ENCODE measurements at regions of chr12 and their contacts with region 1.

Region 1: DNA sequence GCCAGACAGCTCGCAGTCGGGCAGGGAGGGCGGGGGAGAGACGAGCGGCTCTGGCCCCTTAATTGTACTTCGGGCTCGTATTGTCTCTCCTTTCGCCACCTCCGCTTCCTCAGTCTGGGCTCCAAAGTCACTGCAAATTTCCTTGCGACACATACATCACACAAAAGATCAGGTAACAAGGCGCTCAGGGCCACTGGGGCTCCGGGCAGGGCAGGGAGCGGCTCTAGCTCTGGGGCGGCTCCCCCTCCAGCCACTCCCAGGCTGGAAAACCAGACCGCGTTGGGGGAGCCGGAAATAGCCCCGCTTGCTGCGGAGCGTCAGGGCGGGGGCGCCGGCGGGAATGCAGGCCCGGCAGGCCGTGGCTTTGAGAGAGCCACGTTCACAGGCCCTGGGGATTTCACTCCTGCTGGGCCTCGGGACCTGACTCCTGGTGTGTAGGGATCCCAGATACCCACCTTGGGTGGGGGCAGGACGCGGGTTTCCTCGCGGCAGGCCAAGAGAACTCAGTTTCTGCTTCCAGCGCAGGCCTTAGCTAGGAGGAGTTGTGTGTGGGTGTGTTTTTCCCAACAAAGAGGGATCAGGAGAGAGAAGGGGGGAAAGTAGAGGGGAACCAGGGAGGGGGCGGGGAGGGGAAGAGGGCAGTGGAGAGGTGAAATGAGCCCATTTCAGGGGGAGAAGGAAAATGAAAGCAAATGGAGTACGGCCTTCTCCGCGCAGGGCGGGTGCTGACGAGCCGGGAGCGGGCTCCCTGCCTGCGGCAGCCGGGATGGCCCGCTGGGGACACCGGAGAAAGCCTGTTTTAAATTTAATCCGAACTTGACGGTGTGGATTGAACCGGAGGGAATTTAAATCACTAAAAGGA is 4.4 kb upstream of the HOXC9 start:
- DNase-seq: peak in 1 of 2 donors; percentile 60
- ATAC-seq: peak; percentile 50 to 65 (median 53)
- H3K4me3 ChIP-seq: peak overlapping the region; percentile 43
- H3K4me3 Mint-ChIP-seq: peak overlapping the region; percentile 91
- H3K27ac ChIP-seq: no peak overlapping the region
- H3K27ac Mint-ChIP-seq: peak overlapping the region in 1 of 2 donors; percentile 81
- H3K4me1 ChIP-seq: peaks cover 49% of the 10 kb centered on the region
- H3K4me1 Mint-ChIP-seq: peaks cover 46 to 47% of the 10 kb centered on the region in 2 donors
- H3K27me3 ChIP-seq: peaks cover 92% of the 10 kb centered on the region
- H3K27me3 Mint-ChIP-seq: peaks cover 74 to 89% of the 10 kb centered on the region in 2 donors
- CTCF ChIP-seq: no peak

Region 2: DNA sequence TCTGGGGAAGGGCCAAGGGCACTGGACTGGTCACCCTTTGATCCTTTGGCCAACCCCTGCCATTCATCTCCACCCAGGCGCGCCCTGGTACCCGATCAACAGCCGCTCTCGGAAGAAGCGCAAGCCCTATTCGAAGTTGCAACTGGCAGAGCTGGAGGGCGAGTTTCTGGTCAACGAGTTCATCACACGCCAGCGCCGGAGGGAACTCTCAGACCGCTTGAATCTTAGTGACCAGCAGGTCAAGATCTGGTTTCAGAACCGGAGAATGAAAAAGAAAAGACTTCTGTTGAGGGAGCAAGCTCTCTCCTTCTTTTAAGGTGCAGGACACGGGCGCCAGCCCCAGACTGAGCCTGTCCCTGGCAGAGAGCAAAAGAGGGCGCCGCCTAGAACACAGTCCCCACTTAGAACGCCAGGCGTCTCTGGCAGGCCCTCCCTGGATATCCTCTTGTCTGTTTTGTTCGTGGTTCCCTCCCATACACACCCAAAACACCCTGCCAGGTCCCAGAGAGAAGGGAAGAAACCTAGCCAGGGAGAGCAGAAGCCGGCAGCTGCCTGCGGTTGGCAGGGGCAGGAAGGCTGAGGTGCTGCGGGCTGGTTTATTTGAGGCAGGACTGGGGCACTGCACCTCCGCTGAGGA is 39.2 kb before region 1 on chr12:
- intact Hi-C with region 1: loop called (anchors 5 kb)
- DNase-seq: peak in 1 of 2 donors; percentile 45
- ATAC-seq: peak in 1 of 3 donors; percentile 38
- H3K4me3 ChIP-seq: no peak overlapping the region
- H3K4me3 Mint-ChIP-seq: peak overlapping the region; percentile 13
- H3K27ac ChIP-seq: no peak overlapping the region
- H3K27ac Mint-ChIP-seq: no peak overlapping the region
- H3K4me1 ChIP-seq: peaks cover 41% of the 10 kb centered on the region
- H3K4me1 Mint-ChIP-seq: peaks cover 24 to 25% of the 10 kb centered on the region in 2 donors
- H3K27me3 ChIP-seq: peaks cover 95% of the 10 kb centered on the region
- H3K27me3 Mint-ChIP-seq: peaks cover 76 to 77% of the 10 kb centered on the region in 2 donors
- CTCF ChIP-seq: no peak